MCF 10A (cell line): ENCODE measurements at regions of chr12 and their contacts with region 1.

Region 1: DNA sequence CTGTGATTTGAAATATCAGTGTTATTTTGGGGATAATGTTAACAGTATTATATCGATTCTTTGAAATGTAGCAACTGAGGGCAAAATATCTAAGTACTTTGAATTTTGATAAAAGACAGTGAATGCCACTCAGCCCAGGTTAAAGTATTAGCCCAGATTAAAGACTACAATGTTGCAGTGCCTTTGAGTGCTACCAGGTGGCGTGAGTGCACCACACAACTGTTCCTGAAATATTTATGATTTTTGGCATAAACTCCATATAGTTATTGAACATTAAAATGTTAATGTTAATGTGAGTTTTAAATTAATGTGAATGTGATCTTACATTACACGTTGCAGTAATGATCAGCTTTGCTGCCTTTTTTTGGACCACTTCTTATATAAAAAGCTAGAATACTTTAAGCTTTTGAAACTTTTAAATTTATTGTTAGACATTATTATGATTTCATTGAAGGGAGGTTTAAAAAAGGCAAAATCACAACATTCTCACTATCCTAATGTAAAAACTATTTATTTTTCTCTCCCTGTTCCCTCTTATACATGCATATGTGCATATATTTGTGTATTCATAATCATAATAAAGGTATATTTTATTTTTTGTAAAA is 22.5 kb downstream of the MRPS35 start:
- DNase-seq: peak; percentile 41
- H3K4me3 Mint-ChIP-seq: no peak overlapping the region
- H3K27ac Mint-ChIP-seq: no peak overlapping the region
- H3K4me1 Mint-ChIP-seq: peaks cover 5% of the 10 kb centered on the region
- H3K27me3 Mint-ChIP-seq: no peaks in the 10 kb centered on the region
- CTCF ChIP-seq: peak; percentile 91

Region 2: DNA sequence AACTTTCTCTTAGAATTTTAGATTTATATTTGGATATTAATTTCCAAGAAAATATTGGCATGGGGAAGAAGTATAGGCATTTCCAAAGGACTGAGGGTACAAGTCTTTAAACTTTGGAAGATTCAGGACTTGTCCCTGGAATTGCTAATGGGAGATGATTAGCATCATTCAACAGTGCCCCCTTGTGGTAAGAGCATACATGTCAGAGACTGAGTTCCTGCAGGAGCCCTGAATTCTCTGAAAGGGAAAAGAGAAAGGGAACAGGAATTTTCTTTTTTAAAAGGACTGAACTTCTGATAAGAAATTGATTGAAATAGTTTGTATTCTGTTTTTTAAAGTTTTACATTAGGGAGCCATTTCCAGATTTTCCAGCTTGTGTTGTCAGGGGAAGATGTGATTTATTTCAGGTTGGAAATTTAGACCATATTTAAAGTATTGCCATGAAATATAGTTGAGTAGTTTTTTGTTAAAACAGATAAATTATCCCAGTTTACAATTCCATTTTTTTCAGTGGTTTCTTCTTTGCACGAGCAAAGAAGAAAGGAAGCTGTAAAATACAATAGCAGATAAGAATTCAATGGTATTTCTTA is 80.9 kb before region 1 on chr12:
- CTCF ChIA-PET with region 1: no interaction called
- POLR2A ChIA-PET with region 1: no interaction called
- intact Hi-C with region 1: no loop called
- DNase-seq: peak; percentile 87
- H3K4me3 Mint-ChIP-seq: no peak overlapping the region
- H3K27ac Mint-ChIP-seq: no peak overlapping the region
- H3K4me1 Mint-ChIP-seq: no peaks in the 10 kb centered on the region
- H3K27me3 Mint-ChIP-seq: no peaks in the 10 kb centered on the region
- CTCF ChIP-seq: peak; percentile 82

Region 3: DNA sequence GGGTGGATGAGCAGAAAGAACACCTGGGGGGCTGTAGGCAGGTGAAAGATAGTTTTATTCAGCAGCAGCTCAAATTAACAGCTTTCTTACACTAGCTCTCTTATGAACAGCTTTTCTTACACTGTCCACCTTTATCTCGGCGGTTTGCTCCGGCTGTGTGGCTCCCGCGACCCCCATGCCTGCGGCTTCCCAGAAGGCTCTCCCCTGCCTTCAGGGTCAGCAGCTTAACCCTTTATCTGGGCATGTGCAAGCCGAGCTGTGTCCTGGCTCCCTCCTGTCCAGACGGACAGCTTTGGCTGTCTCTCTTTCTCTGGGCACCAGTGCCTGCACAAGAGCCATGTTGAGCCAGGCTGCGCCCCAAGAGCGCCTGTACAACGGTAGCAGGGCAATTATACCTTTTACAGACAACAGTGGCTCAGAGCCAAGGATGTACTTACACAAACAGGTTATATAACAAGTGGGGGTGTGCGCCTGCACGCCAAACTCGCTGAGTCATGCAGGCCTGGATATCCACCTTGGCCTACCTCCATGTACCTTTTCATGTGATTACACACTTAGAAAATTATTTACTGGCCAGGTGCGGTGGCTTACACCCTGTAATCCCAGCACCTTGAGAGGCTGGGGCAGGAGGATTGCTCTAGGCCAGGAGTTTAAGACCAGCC is 18.4 kb after region 1 on chr12:
- CTCF ChIA-PET with region 1: interaction called, 4 read pairs
- POLR2A ChIA-PET with region 1: interaction called, 10 read pairs
- intact Hi-C with region 1: no loop called
- DNase-seq: peak; percentile 88
- H3K4me3 Mint-ChIP-seq: no peak overlapping the region
- H3K27ac Mint-ChIP-seq: peak overlapping the region; percentile 74
- H3K4me1 Mint-ChIP-seq: peaks cover 23% of the 10 kb centered on the region
- H3K27me3 Mint-ChIP-seq: no peaks in the 10 kb centered on the region
- CTCF ChIP-seq: no peak

Region 4: GRCh38 chr12:27821259-27821973 is 88.3 kb after region 1 on chr12:
- CTCF ChIA-PET with region 1: interaction called, 75 read pairs
- POLR2A ChIA-PET with region 1: interaction called, 4 read pairs
- intact Hi-C with region 1: loop called (anchors 1 kb)
- DNase-seq: peak; percentile 89
- H3K4me3 Mint-ChIP-seq: peak overlapping the region; percentile 64
- H3K27ac Mint-ChIP-seq: peak overlapping the region; percentile 89
- H3K4me1 Mint-ChIP-seq: peaks cover 5% of the 10 kb centered on the region
- H3K27me3 Mint-ChIP-seq: no peaks in the 10 kb centered on the region
- CTCF ChIP-seq: peak; percentile 80

Region 5: DNA sequence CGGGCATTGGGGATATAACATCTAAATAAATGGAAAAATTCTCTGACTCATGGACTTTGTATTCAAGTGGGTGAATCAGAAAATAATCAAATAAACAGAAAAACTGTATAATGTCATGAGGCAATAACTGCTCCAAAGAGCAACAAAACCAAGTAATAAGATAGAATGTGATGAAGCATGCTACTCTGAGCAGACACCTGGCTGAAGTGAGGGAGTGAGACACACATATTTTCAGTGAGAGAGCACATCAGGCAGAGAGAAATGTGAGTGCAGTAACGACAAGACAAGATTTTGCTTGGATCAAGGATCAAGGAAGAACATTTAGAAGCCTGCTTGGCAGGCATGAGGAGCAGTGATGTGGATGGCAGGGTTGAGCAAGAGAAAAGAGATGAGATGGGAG is 381.3 kb after region 1 on chr12:
- CTCF ChIA-PET with region 1: no interaction called
- POLR2A ChIA-PET with region 1: no interaction called
- intact Hi-C with region 1: no loop called
- DNase-seq: peak; percentile 42
- H3K4me3 Mint-ChIP-seq: no peak overlapping the region
- H3K27ac Mint-ChIP-seq: peak overlapping the region; percentile 4
- H3K4me1 Mint-ChIP-seq: peaks cover 6% of the 10 kb centered on the region
- H3K27me3 Mint-ChIP-seq: no peaks in the 10 kb centered on the region
- CTCF ChIP-seq: no peak

Region 6: GRCh38 chr12:28172434-28173030 is 439.4 kb after region 1 on chr12:
- CTCF ChIA-PET with region 1: interaction called, 3 read pairs
- POLR2A ChIA-PET with region 1: interaction called, 3 read pairs
- intact Hi-C with region 1: loop called (anchors 1 kb)
- DNase-seq: peak; percentile 78
- H3K4me3 Mint-ChIP-seq: no peak overlapping the region
- H3K27ac Mint-ChIP-seq: no peak overlapping the region
- H3K4me1 Mint-ChIP-seq: peaks cover 10% of the 10 kb centered on the region
- H3K27me3 Mint-ChIP-seq: no peaks in the 10 kb centered on the region
- CTCF ChIP-seq: peak; percentile 63

Region 7: GRCh38 chr12:28963554-28963953 is 1230.4 kb after region 1 on chr12:
- CTCF ChIA-PET with region 1: interaction called, 4 read pairs
- POLR2A ChIA-PET with region 1: no interaction called
- intact Hi-C with region 1: loop called (anchors 10 kb)
- DNase-seq: peak; percentile 49
- H3K4me3 Mint-ChIP-seq: no peak overlapping the region
- H3K27ac Mint-ChIP-seq: no peak overlapping the region
- H3K4me1 Mint-ChIP-seq: peaks cover 20% of the 10 kb centered on the region
- H3K27me3 Mint-ChIP-seq: no peaks in the 10 kb centered on the region
- CTCF ChIP-seq: peak; percentile 48